IMR-90 (cell line): ENCODE measurements at regions of chr6 and their contacts with region 1.

Region 1: DNA sequence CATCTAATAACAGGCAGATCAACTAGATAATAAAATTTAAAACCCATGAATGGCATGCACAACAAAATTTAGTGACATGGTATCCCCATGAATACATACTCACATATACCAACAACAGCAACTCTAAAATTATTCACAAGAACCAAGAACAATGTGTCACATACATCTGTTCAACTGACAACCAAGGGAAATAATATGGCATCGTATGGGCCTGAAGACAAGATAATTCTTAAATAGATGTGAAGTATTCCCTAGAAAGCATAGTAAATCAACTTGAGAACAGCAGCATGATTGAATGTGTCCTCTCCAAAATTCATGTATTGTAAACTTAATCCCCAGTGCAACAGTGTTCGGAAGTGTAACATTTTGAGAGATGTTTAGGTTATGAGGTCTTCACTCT is 635.5 kb downstream of the EYS start:
- DNase-seq: no peak
- ATAC-seq: no peak
- H3K4me3 ChIP-seq: no peak overlapping the region
- H3K27ac ChIP-seq: no peak overlapping the region
- H3K4me1 ChIP-seq: no peaks in the 10 kb centered on the region
- H3K27me3 ChIP-seq: no peaks in the 10 kb centered on the region
- CTCF ChIP-seq: no peak
- POLR2A ChIP-seq: no peak
- RAD21 ChIP-seq: no peak

Region 2: GRCh38 chr6:64874776-64875175 is 196.7 kb before region 1 on chr6:
- CTCF ChIA-PET with region 1: no interaction called
- POLR2A ChIA-PET with region 1: no interaction called
- dilution Hi-C with region 1: no loop called
- in situ Hi-C with region 1: no loop called
- intact Hi-C with region 1: loop called (anchors 5 kb)
- DNase-seq: peak; percentile 21
- ATAC-seq: no peak
- H3K4me3 ChIP-seq: no peak overlapping the region
- H3K27ac ChIP-seq: no peak overlapping the region
- H3K4me1 ChIP-seq: no peaks in the 10 kb centered on the region
- H3K27me3 ChIP-seq: no peaks in the 10 kb centered on the region
- CTCF ChIP-seq: no peak
- POLR2A ChIP-seq: no peak
- RAD21 ChIP-seq: no peak